Sigmoid colon (tissue), 7 donors: ENCODE measurements at regions of chr15 and their contacts with region 1.

Region 1: GRCh38 chr15:39580117-39580484 is 778 bp upstream of the THBS1 start:
- DNase-seq: peak; percentile 97
- H3K4me3 ChIP-seq: peak overlapping the region; percentile 41 to 77 (median 70)
- H3K27ac ChIP-seq: peak overlapping the region; percentile 89 to 97 (median 96)
- H3K4me1 ChIP-seq: peaks cover 0 to 58% (median 50%) of the 10 kb centered on the region in 4 donors
- H3K27me3 ChIP-seq: no peaks in the 10 kb centered on the region
- CTCF ChIP-seq: peak; percentile 83 to 99 (median 92)
- EP300 ChIP-seq: peak in 2 of 4 donors; percentile 9 to 31
- POLR2A ChIP-seq: no peak

Region 2: DNA sequence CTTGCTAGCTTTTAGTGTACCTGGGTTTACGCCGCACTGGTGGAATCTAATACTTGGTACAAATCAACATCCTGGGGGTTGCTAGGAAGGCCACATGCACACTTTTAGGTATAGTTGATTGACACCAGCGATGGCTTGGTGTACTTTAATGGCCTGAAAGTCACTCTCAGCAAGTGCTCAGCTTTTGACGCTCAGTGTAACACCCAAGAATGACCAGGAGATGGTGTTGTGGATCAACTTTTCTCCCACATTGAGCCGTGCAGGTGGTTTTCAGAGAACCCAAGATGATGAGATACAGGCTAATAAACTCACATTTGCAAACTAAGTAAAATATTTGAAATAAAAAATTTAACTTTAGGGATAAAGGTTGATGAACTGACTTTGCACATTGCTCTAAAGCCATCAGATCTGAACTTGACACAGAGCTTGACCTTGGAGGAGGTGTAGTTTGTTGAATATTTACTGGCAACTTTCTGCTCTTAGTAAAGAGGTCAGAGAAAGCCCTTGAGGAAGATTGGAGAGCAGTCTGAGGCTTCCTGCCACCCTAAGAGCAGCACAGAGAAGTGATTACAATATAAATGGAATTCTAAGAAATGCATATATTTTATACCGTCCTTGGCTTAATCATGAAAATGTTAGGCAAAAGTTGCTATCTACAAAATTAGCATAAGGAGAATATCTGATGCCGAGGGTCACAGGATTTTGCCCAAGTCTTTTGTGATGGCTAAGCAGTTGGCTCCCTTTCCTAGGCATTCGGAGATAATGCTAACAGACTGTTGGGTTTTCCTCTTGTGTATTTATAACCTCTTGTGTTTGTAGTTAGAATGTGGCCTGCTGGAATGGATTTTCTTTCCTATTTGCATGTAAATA is 872.1 kb before region 1 on chr15:
- intact Hi-C with region 1: loop called (anchors 5 kb)
- DNase-seq: no peak
- H3K4me3 ChIP-seq: no peak overlapping the region
- H3K27ac ChIP-seq: peak overlapping the region in 2 of 4 donors; percentile 35 to 48
- H3K4me1 ChIP-seq: peaks cover 0 to 9% (median 4%) of the 10 kb centered on the region in 4 donors
- H3K27me3 ChIP-seq: no peaks in the 10 kb centered on the region
- CTCF ChIP-seq: peak; percentile 34 to 74 (median 71)
- EP300 ChIP-seq: no peak
- POLR2A ChIP-seq: no peak

Region 3: GRCh38 chr15:39079296-39079834 is 500.7 kb before region 1 on chr15:
- intact Hi-C with region 1: loop called (anchors 5 kb)
- DNase-seq: no peak
- H3K4me3 ChIP-seq: no peak overlapping the region
- H3K27ac ChIP-seq: peak overlapping the region in 2 of 4 donors; percentile 7 to 53
- H3K4me1 ChIP-seq: peaks cover 0 to 37% (median 19%) of the 10 kb centered on the region in 4 donors
- H3K27me3 ChIP-seq: no peaks in the 10 kb centered on the region
- CTCF ChIP-seq: no peak
- EP300 ChIP-seq: no peak
- POLR2A ChIP-seq: no peak

Region 4: GRCh38 chr15:39312984-39313383 is 267.1 kb before region 1 on chr15:
- intact Hi-C with region 1: loop called (anchors 10 kb)
- DNase-seq: no peak
- H3K4me3 ChIP-seq: no peak overlapping the region
- H3K27ac ChIP-seq: no peak overlapping the region
- H3K4me1 ChIP-seq: peaks cover 0 to 11% (median 4%) of the 10 kb centered on the region in 4 donors
- H3K27me3 ChIP-seq: no peaks in the 10 kb centered on the region
- CTCF ChIP-seq: peak in 1 of 4 experiments; percentile 29
- EP300 ChIP-seq: no peak
- POLR2A ChIP-seq: no peak

Region 5: GRCh38 chr15:39472621-39473297 is 107.3 kb before region 1 on chr15:
- intact Hi-C with region 1: loop called (anchors 1 kb)
- DNase-seq: peak; percentile 99
- H3K4me3 ChIP-seq: no peak overlapping the region
- H3K27ac ChIP-seq: peak overlapping the region; percentile 79 to 95 (median 85)
- H3K4me1 ChIP-seq: peaks cover 0 to 46% (median 30%) of the 10 kb centered on the region in 4 donors
- H3K27me3 ChIP-seq: no peaks in the 10 kb centered on the region
- CTCF ChIP-seq: no peak
- EP300 ChIP-seq: peak; percentile 95 to 99 (median 98)
- POLR2A ChIP-seq: no peak

Region 6: DNA sequence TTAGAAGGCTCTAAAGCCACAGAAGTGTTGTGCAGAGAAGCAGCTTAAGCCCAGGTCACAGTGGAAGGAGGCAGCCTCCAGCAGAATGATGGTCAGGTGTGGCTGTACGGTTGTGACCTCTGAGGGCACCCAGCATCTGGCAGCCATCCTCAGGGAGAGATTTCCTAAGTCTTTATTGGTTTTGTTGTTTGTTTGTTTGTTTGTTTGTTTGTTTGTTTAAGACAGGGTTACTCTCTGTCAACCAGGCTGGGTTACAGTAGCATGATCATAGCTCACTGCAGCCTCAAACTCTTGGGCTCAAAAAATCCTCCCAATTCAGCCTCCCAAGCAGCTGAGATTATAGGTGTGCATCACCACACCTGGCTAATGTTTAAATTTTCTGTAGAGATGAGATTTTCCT is 53.9 kb before region 1 on chr15:
- intact Hi-C with region 1: no loop called
- DNase-seq: no peak
- H3K4me3 ChIP-seq: no peak overlapping the region
- H3K27ac ChIP-seq: no peak overlapping the region
- H3K4me1 ChIP-seq: peaks cover 0 to 7% (median 3%) of the 10 kb centered on the region in 4 donors
- H3K27me3 ChIP-seq: no peaks in the 10 kb centered on the region
- CTCF ChIP-seq: no peak
- EP300 ChIP-seq: no peak
- POLR2A ChIP-seq: no peak

Region 7: DNA sequence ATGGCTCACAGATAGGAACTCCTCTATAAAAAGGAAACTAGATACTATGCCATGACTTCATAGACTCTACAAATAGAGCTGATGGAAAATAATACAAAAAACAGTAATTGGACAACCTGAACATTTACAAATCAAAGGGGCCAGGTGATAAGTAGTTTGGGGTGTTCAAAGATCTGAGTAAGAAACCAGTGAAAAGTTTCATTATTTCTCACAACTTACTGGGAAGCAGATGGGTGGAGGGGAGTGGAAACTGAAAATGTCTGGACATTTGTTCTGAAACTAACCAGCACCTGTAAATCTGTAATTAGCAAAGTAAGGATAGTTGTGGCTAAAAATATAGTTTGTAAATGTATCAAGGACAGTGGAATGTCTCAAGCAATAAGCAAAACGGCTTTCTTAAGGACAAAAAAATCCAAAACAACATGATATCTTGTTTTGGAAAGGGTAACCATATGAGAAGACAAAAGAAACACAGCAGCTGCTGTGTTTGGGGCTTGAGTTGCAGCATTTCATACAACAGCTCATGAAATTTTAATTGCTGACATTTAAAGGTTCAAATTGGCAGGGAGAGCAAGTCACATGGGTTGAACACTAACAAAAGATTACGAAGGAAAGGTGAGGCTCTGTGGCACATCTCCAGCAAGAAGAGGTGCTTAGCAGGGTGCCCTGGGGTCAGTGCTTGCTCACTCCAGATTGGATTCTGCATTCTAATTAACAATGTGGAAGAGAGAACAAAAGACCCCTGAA is 26.0 kb before region 1 on chr15:
- intact Hi-C with region 1: no loop called
- DNase-seq: peak; percentile 85
- H3K4me3 ChIP-seq: no peak overlapping the region
- H3K27ac ChIP-seq: peak overlapping the region; percentile 4 to 80 (median 74)
- H3K4me1 ChIP-seq: peaks cover 0 to 48% (median 44%) of the 10 kb centered on the region in 4 donors
- H3K27me3 ChIP-seq: no peaks in the 10 kb centered on the region
- CTCF ChIP-seq: no peak
- EP300 ChIP-seq: peak; percentile 69 to 77 (median 77)
- POLR2A ChIP-seq: no peak

Region 8: GRCh38 chr15:39657714-39658113 is 77.6 kb after region 1 on chr15:
- intact Hi-C with region 1: no loop called
- DNase-seq: no peak
- H3K4me3 ChIP-seq: no peak overlapping the region
- H3K27ac ChIP-seq: no peak overlapping the region
- H3K4me1 ChIP-seq: peaks cover 0 to 11% (median 7%) of the 10 kb centered on the region in 4 donors
- H3K27me3 ChIP-seq: no peaks in the 10 kb centered on the region
- CTCF ChIP-seq: no peak
- EP300 ChIP-seq: no peak
- POLR2A ChIP-seq: no peak

Region 9: GRCh38 chr15:39756806-39757522 is 176.9 kb after region 1 on chr15:
- intact Hi-C with region 1: loop called (anchors 5 kb)
- DNase-seq: no peak
- H3K4me3 ChIP-seq: no peak overlapping the region
- H3K27ac ChIP-seq: no peak overlapping the region
- H3K4me1 ChIP-seq: no peaks in the 10 kb centered on the region
- H3K27me3 ChIP-seq: no peaks in the 10 kb centered on the region
- CTCF ChIP-seq: peak; percentile 27 to 88 (median 66)
- EP300 ChIP-seq: no peak
- POLR2A ChIP-seq: no peak